MCF 10A (cell line): ENCODE measurements at regions of chr20 and their contacts with region 1.

Region 1: DNA sequence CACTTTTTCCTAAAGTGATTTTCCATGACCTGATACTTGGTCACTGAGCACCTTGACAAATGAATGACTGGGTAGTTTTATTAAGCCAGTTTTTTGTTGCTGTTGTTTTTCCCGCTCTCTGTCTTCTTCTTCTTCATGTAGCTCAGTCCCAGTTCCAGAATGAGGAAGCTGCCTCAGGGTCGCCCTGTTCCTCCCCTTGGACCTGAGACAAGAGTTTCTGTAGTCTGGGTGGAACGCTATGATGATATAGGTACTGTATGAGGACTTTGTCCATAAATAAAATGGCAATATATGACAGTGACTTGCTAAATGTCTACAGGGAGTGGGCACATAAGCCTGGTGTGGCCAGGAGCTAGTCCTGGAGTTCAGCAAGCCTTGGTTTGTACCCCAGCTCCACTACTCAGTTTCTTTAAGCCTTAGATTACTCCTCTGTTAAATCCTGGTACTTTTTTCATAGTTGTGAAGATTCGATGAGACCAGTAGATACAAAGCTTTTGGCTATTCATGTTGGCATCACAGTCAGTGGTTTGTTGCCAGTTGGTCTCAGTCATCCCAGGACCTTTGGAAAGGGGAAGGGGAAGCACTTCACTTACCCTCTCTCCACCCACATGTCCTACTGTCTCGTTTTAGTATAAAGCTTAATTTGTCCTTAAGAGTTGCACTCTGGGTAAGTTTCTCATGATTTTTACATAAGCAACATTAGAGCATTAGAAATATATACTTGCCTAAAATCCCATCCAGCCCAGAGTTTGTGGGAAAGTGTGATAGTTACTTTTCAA is 11.1 kb upstream of the ADIG start:
- DNase-seq: no peak
- H3K4me3 Mint-ChIP-seq: no peak overlapping the region
- H3K27ac Mint-ChIP-seq: no peak overlapping the region
- H3K4me1 Mint-ChIP-seq: no peaks in the 10 kb centered on the region
- H3K27me3 Mint-ChIP-seq: no peaks in the 10 kb centered on the region
- CTCF ChIP-seq: no peak

Region 2: GRCh38 chr20:38094373-38094891 is 475.5 kb before region 1 on chr20:
- CTCF ChIA-PET with region 1: no interaction called
- POLR2A ChIA-PET with region 1: no interaction called
- intact Hi-C with region 1: no loop called
- DNase-seq: peak; percentile 73
- H3K4me3 Mint-ChIP-seq: no peak overlapping the region
- H3K27ac Mint-ChIP-seq: peak overlapping the region; percentile 52
- H3K4me1 Mint-ChIP-seq: peaks cover 12% of the 10 kb centered on the region
- H3K27me3 Mint-ChIP-seq: no peaks in the 10 kb centered on the region
- CTCF ChIP-seq: no peak

Region 3: GRCh38 chr20:38559764-38560163 is 10.2 kb before region 1 on chr20:
- CTCF ChIA-PET with region 1: interaction called, 4 read pairs
- POLR2A ChIA-PET with region 1: interaction called, 10 read pairs
- intact Hi-C with region 1: no loop called
- DNase-seq: no peak
- H3K4me3 Mint-ChIP-seq: no peak overlapping the region
- H3K27ac Mint-ChIP-seq: no peak overlapping the region
- H3K4me1 Mint-ChIP-seq: no peaks in the 10 kb centered on the region
- H3K27me3 Mint-ChIP-seq: no peaks in the 10 kb centered on the region
- CTCF ChIP-seq: no peak